ENCODE measurements at regions of chr9 and their contacts with region 1.

Region 1: GRCh38 chr9:124852829-124853531 is at the start of gene WDR38:
- DNase-seq: peak; percentile 87
- ATAC-seq: peak; percentile 90
- total RNA-seq, gene WDR38: not detected

Region 2: DNA sequence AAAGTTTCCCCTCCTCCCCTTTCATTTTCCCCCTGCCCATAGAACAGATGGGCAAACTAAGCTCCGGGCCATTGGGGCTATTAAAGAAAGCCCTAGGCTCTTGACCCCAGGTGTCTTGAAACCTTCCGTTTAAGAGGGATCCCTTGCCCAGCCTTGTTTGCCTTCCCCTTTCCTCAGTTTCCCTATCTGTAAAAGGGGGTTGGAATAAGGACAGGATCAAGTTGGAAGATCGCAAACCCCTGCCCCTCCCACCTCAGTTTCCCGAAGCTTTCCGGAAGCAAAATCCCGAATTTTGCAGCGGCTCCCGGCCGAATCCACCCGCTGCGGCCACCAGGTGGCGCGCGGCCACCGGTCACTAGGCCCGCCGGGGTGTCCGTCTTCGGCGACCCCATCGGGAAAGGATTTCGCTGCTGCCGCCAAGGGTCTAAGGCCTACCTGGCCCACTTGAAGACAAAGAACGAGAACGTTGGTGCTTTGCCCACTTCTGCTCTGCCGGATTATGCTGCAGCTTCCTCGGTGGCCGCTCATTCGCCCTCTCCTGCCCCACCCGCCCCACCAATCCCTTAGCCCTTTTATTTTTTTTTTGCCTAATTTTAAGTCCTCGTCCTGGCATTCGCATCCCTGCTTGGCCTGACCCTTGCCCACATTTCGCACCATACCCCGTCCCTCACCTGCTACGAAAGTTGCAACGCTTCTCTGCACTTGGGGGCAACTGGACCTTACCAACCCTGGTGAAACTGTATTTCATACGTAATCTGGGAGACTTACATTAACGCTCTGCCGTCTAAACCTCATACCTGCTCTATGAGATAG is 80.9 kb before region 1 on chr9:
- intact Hi-C with region 1: loop called (anchors 2 kb)
- DNase-seq: peak; percentile 86
- ATAC-seq: peak; percentile 62

Measured in sciatic nerve (tissue), 2 donors.